ENCODE measurements at regions of chr2 and their contacts with region 1.

Region 1: DNA sequence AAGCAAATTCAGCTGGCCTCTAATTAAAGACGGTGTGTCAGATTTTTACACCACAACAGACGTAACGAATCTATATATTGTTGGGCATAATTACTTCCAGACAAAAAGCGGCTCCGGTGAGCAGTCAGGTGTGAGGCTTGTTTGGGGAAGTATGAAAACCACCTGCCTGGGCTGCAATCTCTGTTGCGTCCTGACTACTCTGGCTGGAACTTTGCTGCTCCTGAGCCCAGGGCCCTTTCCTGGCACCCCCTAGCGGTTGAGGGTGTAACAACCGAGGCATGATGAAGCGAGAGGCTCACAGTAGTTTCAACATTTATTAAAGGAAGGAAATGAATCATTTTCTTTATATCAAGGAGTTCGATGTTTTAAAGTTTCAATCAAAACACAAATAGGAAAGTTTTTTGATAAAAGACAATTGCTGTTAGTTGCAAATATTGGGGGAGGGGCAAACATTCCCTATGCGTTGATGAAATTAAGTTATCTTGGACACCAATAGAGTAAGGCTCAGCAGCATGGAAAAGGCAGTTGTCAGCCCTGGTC is 10.6 kb upstream of the ITGB6 start:
- DNase-seq: peak; percentile 39 to 79 (median 67)
- ATAC-seq: peak; percentile 91
- H3K4me3 ChIP-seq: no peak overlapping the region
- H3K4me3 Mint-ChIP-seq: no peak overlapping the region
- H3K27ac ChIP-seq: no peak overlapping the region
- H3K27ac Mint-ChIP-seq: no peak overlapping the region
- H3K4me1 ChIP-seq: no peaks in the 10 kb centered on the region
- H3K4me1 Mint-ChIP-seq: peaks cover 7% of the 10 kb centered on the region
- H3K27me3 ChIP-seq: no peaks in the 10 kb centered on the region
- H3K27me3 Mint-ChIP-seq: peaks cover 9% of the 10 kb centered on the region
- CTCF ChIP-seq: peak; percentile 85

Region 2: DNA sequence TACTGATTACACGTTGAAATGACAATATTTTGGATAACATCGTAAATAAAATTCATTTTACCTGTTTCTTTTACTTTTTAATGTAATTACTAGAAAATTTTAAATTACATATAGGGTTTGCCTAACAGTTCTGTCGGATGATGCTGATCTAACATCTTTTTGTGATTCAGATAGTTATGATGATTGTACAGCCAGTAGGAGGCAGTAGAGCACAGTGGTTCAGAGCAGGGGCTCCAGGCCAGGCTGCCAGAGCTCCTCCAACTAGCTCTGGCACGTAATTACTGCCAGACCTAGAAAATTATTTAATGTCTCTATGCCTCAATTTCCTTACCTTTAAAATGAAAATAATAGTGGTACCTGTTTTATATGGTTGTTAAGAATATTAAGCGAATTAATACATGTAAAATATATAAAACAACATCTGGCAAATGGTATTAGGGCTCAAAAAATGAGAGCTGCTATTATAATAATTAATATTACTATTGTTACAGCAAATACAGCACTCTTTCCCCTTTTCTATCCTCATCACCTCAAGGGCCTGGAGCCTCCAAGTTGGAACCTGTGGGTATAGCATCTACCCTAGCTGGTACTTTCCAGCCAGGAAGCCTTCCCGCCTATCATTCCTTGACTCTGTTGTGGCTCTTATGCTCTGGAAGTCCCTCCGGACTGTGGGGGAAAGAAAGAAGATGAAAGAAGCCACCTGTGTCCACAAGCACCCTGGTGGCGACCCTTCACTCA is 100.6 kb before region 1 on chr2:
- CTCF ChIA-PET with region 1: interaction called, 80 read pairs
- POLR2A ChIA-PET with region 1: no interaction called
- intact Hi-C with region 1: loop called (anchors 1 kb)
- DNase-seq: peak in 8 of 9 experiments; percentile 9 to 72 (median 46)
- ATAC-seq: peak; percentile 64
- H3K4me3 ChIP-seq: no peak overlapping the region
- H3K4me3 Mint-ChIP-seq: no peak overlapping the region
- H3K27ac ChIP-seq: no peak overlapping the region
- H3K27ac Mint-ChIP-seq: no peak overlapping the region
- H3K4me1 ChIP-seq: no peaks in the 10 kb centered on the region
- H3K4me1 Mint-ChIP-seq: no peaks in the 10 kb centered on the region
- H3K27me3 ChIP-seq: no peaks in the 10 kb centered on the region
- H3K27me3 Mint-ChIP-seq: peaks cover 12% of the 10 kb centered on the region
- CTCF ChIP-seq: peak; percentile 86